T-cell (primary cell): ENCODE measurements at regions of chr1 and their contacts with region 1.

Region 1: DNA sequence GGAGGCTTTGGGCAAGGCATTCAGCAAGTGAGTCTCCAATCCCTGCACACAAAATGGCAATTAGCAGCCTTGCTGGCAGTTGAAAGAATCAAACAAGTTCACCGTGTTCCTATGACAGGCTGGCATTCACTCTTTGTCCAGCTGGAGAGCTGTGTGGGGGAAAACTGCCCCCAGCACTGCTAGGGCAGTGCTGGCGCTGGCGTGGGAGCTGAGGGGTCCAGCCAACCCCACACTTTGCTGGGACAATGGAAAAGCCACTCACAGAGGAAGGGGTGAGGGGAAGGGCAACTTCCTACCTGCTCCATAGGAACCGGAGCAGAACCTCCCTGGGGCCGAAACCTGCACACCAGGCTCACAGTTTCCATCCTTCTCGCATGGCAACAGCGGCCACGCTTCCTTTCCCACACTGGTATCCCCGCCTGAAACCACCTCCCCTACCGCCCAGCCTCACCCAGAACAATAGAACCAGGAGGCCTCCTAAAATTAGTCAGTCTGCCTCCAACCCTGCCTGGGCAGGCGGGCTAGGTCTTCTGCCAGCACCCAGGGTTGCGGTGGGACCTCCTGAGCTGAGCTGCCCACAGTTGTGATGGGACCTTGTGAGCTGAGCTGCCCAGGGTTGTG is 26.8 kb upstream of the KCNN3 start:
- DNase-seq: no peak
- ATAC-seq: no peak
- H3K4me3 ChIP-seq: no peak overlapping the region
- H3K4me3 Mint-ChIP-seq: no peak overlapping the region
- H3K27ac ChIP-seq: no peak overlapping the region
- H3K27ac Mint-ChIP-seq: no peak overlapping the region
- H3K4me1 ChIP-seq: no peaks in the 10 kb centered on the region
- H3K4me1 Mint-ChIP-seq: peaks cover 0 to 6% (median 0%) of the 10 kb centered on the region in 3 donors
- H3K27me3 ChIP-seq: peaks cover 0 to 13% of the 10 kb centered on the region in 2 experiments
- H3K27me3 Mint-ChIP-seq: no peaks in the 10 kb centered on the region

Region 2: DNA sequence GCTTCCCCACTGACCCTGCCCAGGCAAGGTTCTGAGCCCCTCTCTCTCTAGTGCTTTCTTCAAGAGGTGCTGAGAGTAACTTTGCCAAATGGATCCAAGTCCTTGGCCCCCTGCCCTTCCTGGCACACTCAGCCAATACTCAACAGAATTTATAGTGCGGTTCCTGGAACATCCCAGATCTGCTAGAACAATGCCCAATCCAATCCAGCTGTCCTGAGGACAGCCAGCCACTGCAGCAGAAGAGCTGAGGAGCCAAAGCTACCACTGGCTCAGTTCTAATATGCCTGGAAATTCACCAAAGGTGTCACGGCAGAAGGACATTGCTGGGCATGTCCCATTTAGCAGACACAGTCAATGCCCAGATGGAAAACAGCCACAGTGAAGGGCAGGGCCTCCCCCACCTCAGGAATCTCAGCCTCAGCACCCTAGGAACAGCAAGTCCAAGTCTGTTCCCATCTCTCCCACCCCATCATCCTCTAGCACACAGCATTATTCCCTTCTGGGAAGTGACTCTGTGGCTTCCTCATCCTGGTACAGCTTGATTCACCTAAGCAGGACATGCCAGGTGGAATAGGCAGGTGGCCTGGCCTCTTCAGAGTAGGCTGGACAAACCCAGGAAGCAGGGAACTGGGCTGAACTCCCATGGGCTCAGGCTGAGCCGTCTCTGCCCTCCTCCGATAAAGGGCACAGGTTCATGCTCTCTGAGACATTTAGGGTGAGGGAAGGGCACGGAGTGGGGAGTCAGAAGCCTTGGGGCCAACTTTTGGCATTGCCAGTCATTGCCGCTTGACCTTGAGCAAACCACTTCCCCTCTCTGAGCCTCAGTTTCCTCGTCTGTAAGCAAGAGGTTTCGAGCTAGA is 15.0 kb after region 1 on chr1:
- CTCF ChIA-PET with region 1: no interaction called
- POLR2A ChIA-PET with region 1: no interaction called
- DNase-seq: no peak
- ATAC-seq: no peak
- H3K4me3 ChIP-seq: no peak overlapping the region
- H3K4me3 Mint-ChIP-seq: no peak overlapping the region
- H3K27ac ChIP-seq: no peak overlapping the region
- H3K27ac Mint-ChIP-seq: no peak overlapping the region
- H3K4me1 ChIP-seq: no peaks in the 10 kb centered on the region
- H3K4me1 Mint-ChIP-seq: no peaks in the 10 kb centered on the region
- H3K27me3 ChIP-seq: no peaks in the 10 kb centered on the region
- H3K27me3 Mint-ChIP-seq: no peaks in the 10 kb centered on the region

Region 3: GRCh38 chr1:155029513-155030242 is 132.8 kb after region 1 on chr1:
- CTCF ChIA-PET with region 1: no interaction called
- POLR2A ChIA-PET with region 1: interaction called in 1 of 2 experiments, 10 read pairs
- DNase-seq: no peak
- ATAC-seq: no peak
- H3K4me3 ChIP-seq: no peak overlapping the region
- H3K4me3 Mint-ChIP-seq: no peak overlapping the region
- H3K27ac ChIP-seq: no peak overlapping the region
- H3K27ac Mint-ChIP-seq: no peak overlapping the region
- H3K4me1 ChIP-seq: no peaks in the 10 kb centered on the region
- H3K4me1 Mint-ChIP-seq: no peaks in the 10 kb centered on the region
- H3K27me3 ChIP-seq: peaks cover 0 to 18% of the 10 kb centered on the region in 2 experiments
- H3K27me3 Mint-ChIP-seq: peaks cover 0 to 1% of the 10 kb centered on the region in 2 donors

Region 4: GRCh38 chr1:155127105-155127964 is 230.5 kb after region 1 on chr1 and contains the start of gene EFNA1:
- CTCF ChIA-PET with region 1: no interaction called
- POLR2A ChIA-PET with region 1: interaction called in 1 of 2 experiments, 10 read pairs
- DNase-seq: peak in 17 of 35 experiments; percentile 8 to 60 (median 29)
- ATAC-seq: peak; percentile 52 to 72 (median 60)
- H3K4me3 ChIP-seq: peak within 1 kb of the TSS; percentile 49 to 77
- H3K4me3 Mint-ChIP-seq: peak within 1 kb of the TSS; percentile 82 to 84 (median 83)
- H3K27ac ChIP-seq: peak within 1 kb of the TSS; percentile 16
- H3K27ac Mint-ChIP-seq: peak within 1 kb of the TSS; percentile 80 to 89
- H3K4me1 ChIP-seq: peaks cover 11 to 42% of the 10 kb centered on the region in 2 experiments
- H3K4me1 Mint-ChIP-seq: peaks cover 37 to 42% (median 42%) of the 10 kb centered on the region in 3 donors
- H3K27me3 ChIP-seq: peaks cover 0 to 57% of the 10 kb centered on the region in 2 experiments
- H3K27me3 Mint-ChIP-seq: peaks cover 0 to 22% of the 10 kb centered on the region in 2 donors
- total RNA-seq, gene EFNA1: 1.6 to 8.4 (median 5.1) TPM